ENCODE measurements at regions of chr1 and their contacts with region 1.

Region 1: DNA sequence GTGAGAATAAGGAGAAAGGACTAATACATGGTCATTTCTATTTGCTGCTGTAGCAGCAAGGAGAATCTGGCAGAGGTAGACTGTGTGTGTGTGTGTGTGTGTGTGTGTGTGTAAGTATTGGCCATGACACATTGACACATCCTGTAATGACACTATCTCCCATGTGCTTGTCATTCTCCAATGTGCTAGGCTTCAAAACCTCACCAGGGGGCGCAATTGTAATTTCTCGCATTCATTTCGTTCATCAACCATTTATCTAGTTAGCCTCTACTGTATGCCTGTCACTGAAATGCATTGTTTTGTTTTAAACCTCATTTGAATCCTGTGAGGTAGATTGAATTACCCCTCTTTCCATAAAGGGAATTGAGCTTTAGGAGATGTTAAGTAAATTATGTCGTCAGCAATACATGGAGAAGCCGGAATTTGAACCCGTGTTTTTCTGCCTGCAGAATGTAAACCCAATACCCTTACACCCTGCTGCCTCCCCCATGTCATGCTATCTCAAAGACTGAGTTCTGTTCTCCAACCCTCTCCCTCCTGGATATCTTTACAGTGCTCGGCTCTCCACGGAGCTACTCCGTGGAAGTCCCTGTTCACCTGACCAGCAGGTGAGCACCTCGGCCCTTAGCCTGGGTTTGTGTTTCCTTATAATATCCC is 100.8 kb downstream of the UCK2 start:
- DNase-seq: no peak
- ATAC-seq: no peak

Region 2: GRCh38 chr1:166166695-166167571 is 238.7 kb after region 1 on chr1 and contains the start of gene FAM78B:
- intact Hi-C with region 1: loop called (anchors 5 kb)
- DNase-seq: peak; percentile 88
- ATAC-seq: peak; percentile 96
- total RNA-seq, gene FAM78B: 3.4 TPM

Region 3: DNA sequence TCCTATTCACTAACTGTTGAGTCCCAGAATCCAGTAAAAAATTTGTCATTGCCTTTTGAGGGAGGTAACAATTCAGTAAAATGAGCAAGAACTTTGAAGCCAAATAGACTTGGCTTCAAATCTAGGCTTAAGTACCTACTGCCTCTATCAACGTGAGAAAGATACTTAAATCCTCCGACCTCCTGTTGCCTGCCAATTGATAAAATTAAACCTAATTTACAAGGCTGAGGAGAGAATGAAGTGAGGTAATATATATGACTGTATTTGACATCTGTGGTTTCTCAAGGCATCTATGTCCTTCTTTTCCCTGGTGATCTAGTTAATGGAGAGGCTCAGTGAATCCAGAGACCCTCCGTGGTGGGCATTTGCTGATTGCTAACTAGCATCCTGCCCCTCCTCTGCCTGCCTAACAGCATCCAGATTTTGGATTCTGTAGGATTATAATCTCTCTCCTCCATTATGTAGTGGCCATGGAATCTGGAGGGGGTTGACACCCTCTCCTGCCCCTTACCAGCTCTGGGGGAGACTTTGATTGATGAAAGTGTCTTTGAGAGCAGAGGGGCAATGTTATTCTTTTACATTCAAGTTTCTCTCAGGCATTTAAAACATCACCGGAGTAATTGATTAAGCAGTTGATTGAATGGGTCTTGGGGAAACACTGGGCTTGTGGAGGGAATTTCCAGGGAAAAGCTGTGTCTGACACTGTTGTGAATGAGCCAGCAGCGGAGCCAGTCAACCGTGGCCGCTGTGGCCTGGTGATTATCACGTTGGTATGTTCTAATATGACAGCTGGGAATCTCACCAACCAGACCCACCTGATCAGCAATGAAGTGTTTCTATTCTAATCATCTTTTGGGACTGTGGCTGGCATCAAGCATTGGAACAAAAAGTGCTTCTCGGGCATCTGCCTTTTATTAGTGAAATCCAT is 379.3 kb after region 1 on chr1:
- intact Hi-C with region 1: loop called (anchors 10 kb)
- DNase-seq: peak; percentile 67
- ATAC-seq: peak; percentile 96

Region 4: GRCh38 chr1:166432655-166433054 is 504.5 kb after region 1 on chr1:
- intact Hi-C with region 1: loop called (anchors 1 kb)
- DNase-seq: no peak
- ATAC-seq: no peak

Region 5: DNA sequence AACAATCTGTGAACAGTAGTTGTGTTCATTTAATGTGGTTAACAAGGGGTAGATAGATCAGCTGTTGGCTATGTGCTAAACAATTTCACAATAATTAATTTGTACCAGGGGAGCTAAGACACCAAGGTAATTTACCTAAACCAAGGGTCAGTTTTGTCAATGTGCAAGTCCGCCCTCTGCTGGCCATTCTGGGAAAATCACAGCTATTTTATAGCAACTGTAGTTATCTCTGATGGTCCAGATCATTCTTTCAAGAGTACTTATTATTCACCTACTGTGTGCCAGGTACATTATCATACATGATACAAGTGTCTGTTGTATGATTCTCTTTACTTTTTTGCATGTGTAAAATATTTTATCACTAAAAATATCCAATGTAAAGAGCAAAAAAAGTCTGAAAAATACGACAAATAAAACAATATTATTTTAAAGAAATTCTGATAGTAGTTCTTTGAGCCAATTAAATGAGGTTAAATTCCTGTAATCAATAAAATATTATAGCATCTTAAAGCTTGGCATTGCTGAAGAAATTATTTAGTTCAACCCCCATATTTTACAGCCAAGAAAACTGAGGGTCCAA is 550.9 kb after region 1 on chr1:
- intact Hi-C with region 1: loop called (anchors 5 kb)
- DNase-seq: no peak
- ATAC-seq: no peak

Measured in Right ventricle myocardium inferior (tissue), 1 donor.